ENCODE measurements at regions of chr1 and their contacts with region 1.

Region 1: DNA sequence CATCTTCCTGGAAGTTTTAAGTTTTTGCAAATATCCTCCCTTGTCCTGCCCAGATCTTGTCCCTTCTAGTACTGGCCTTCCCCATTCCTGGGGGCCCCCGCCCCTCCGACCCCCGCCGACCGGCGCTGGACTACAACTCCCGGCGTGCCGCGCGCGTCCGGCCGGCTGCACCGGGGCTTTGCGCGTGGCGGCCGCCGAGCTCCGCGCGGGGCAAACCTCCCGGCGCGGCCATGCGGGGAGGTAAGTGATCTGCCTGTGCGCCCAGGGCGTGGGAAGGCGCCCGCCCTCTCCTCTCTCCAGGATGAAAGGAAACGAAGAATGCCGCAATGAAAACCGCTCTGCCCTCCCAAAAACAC is 3.2 kb upstream of the SAMD13 start:
- DNase-seq: peak in 1 of 2 experiments; percentile 33
- H3K4me3 ChIP-seq: peak overlapping the region; percentile 99
- H3K27ac ChIP-seq: no peak overlapping the region
- H3K4me1 ChIP-seq: peaks cover 24% of the 10 kb centered on the region
- H3K27me3 ChIP-seq: no peaks in the 10 kb centered on the region
- CTCF ChIP-seq: no peak

Region 2: GRCh38 chr1:84077476-84078107 is 220.7 kb before region 1 on chr1:
- CTCF ChIA-PET with region 1: no interaction called
- POLR2A ChIA-PET with region 1: no interaction called
- intact Hi-C with region 1: loop called (anchors 10 kb)
- DNase-seq: peak; percentile 48 to 70
- H3K4me3 ChIP-seq: peak overlapping the region; percentile 82
- H3K27ac ChIP-seq: peak overlapping the region; percentile 29; the same call in 1 of the 2 replicates
- H3K4me1 ChIP-seq: peaks cover 18% of the 10 kb centered on the region
- H3K27me3 ChIP-seq: no peaks in the 10 kb centered on the region
- CTCF ChIP-seq: no peak

Region 3: DNA sequence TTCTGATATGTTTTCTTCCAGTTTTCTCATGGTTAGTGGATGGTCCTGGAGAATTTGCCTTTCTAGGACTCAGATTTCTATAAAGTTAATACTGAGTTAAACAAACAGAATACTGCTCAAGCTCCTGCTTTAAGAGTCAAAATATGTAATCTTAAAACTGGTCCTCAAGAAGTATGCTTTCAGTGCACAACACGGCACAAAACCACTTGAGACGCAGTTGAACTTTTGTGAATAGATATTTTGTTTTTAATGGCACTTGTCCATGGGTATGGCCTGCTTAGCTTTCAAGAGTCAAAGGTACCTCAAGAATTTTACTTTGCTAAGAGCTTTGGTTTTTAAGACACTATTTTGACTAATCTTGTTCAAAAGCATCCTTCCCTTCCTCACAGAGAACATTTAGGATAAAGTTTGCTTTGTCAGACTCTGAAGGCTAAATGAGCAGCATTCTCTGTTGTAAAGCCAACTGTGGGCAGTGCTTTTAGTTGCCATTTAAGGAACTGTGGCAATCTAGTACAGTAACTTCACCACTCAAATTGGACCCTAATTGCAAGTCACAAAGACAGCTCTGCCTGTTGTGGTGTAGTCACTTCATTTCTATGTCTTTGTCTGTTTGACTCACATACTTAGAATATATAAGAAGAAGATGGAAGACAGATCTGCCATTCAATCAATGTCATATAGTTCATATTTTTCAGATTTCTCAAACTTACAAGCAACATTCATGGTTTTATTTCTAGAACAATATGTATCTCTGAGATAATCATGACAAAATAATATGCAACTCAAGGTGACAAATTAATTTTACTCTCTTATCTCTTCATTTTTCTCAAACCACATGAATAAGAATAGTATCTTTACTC is 32.0 kb after region 1 on chr1:
- CTCF ChIA-PET with region 1: no interaction called
- POLR2A ChIA-PET with region 1: no interaction called
- intact Hi-C with region 1: no loop called
- DNase-seq: no peak
- H3K4me3 ChIP-seq: no peak overlapping the region
- H3K27ac ChIP-seq: no peak overlapping the region
- H3K4me1 ChIP-seq: no peaks in the 10 kb centered on the region
- H3K27me3 ChIP-seq: no peaks in the 10 kb centered on the region
- CTCF ChIP-seq: no peak